Left cardiac atrium (tissue), 4 donors: ENCODE measurements at regions of chr19 and their contacts with region 1.

Region 1: DNA sequence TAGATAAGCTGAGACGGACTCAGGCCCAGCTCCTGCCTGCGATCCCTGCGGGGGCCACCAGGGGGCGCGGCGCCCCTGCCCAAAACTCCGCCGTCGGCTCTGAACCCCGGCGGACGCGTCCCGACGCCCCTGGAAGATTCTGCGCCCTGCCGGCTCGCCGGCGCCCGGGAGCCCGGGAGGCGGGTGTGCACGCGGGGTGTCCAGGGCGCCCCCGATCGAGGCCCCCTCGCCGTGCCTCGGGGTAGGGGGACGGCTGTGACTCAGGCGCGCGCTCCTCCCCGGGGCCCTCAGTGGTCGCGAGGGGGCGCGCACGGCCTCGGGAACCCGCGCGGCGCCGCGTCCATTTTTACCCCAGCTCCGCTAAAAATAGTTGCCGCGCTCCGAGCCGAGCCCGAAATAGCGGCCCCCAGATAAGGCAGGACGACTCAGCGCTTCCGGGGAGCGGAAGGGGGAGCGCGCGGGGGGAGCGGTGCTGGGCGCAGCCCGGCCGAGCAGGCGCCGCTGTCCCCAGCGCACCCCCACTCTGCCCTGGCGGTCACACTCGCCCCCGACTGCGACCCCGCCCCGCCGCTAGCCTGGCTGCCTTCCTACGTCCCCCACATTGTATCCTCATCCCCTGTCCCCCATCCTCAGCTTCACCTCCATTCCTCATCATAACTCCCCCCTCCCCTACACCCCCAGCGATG is 16.0 kb upstream of the ERCC1 start:
- DNase-seq: peak; percentile 88
- ATAC-seq: peak; percentile 71 to 76

Region 2: DNA sequence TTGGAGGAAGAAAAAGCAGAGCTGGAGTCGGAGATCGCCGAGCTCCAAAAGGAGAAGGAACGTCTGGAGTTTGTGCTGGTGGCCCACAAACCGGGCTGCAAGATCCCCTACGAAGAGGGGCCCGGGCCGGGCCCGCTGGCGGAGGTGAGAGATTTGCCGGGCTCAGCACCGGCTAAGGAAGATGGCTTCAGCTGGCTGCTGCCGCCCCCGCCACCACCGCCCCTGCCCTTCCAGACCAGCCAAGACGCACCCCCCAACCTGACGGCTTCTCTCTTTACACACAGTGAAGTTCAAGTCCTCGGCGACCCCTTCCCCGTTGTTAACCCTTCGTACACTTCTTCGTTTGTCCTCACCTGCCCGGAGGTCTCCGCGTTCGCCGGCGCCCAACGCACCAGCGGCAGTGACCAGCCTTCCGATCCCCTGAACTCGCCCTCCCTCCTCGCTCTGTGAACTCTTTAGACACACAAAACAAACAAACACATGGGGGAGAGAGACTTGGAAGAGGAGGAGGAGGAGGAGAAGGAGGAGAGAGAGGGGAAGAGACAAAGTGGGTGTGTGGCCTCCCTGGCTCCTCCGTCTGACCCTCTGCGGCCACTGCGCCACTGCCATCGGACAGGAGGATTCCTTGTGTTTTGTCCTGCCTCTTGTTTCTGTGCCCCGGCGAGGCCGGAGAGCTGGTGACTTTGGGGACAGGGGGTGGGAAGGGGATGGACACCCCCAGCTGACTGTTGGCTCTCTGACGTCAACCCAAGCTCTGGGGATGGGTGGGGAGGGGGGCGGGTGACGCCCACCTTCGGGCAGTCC is 33.1 kb after region 1 on chr19:
- intact Hi-C with region 1: loop called in 1 of 2 experiments (anchors 2 kb)
- DNase-seq: no peak
- ATAC-seq: no peak

Region 3: DNA sequence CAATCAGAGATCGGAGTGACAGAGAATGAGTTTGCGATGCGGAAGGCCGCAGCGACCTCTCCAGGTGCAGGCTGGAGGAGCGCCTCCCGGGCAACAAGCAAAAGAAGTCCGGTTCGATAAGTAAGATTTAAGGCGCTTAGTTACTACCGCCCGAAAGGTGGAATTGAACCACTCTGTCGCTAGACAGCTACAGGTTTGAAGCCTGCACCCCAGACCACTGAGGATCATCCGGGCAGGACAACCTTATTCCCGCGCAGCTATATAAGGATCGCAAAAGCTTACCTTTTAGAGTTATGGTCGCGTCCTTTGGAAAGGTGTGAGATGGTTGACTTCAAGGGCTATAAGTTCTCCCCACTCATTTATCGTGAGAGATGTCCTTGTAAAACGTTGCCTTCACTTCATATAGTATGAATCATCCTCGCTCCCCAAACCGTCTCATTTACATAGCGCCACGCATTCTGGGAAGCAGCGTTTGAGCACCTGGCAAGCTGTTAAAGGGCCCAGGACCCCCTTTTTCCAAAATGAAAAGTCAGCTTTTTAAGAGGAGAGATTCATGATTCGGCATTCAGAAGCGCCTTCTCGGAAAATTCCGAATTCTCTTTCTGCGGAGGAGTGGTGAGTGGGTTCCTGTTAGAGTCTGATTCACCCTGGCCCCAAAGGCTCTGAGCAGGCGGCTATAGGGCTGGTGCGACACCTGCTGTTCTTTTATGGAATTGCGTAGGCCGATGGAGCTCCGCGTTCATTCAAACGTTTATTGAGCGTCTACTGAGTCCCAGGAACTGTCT is 38.9 kb after region 1 on chr19:
- intact Hi-C with region 1: loop called (anchors 1 to 2 kb)
- DNase-seq: peak; percentile 81
- ATAC-seq: peak; percentile 93 to 94

Region 4: DNA sequence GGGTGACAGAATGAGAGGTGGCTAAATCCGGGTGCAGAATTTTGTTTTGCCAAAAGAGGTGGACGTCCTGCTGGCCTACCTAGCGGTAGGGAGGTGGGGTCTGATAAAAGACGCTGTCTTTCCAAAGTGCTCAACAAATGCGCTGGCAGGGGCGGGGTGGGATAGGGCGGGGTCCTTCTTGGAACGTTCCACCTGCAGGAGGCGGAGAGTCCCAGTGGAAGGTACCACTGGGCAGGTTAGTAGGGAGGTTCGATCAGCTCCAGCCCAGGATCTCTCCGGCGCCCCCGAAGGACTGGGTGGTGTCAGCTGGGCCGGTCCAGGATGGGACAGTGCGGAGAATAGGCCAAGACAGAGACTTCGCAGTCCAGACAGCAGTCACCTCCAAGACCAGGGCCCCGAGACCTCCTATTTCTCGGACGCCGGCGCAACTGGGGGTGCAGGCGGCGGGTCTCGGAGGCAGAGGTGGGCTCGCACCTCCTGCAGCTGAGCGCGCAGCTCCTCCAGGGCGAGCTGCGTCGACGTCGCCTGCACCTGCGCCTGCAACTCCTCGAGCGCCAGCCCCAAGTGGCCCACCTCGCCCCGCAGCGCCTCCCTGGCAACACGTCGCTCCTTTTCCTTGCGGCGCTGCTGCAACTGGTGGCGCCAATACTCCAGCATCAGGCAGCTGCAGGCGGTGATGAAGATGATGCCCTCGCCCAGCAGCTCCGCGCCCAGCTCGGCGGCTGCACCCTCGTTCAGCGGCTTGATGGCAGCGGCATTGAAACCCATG is 89.1 kb after region 1 on chr19:
- intact Hi-C with region 1: no loop called
- DNase-seq: no peak
- ATAC-seq: peak in 1 of 2 donors; percentile 65